T-cell (primary cell): ENCODE measurements at regions of chr17 and their contacts with region 1.

Region 1: DNA sequence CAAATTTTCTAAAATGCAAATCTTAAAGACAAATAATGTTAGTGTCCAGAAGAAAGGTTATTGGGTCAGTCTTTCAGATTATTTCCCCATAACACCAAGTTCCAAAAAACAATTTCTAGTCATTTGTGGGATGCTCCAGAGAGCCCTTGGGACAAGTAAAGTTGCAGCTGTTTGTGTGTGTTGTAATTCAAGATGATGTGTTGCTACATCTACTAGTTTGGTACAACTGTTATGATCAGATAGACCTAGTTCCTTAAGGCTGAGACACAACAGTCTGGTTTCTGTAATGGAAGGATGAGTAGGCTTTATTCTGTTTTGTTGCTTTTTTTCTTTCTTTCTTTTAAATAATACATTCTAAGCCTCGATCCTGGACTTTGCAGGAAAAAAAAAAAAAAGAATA is 41.9 kb downstream of the PIGL start:
- DNase-seq: no peak
- ATAC-seq: no peak
- H3K4me3 ChIP-seq: no peak overlapping the region
- H3K4me3 Mint-ChIP-seq: no peak overlapping the region
- H3K27ac ChIP-seq: no peak overlapping the region
- H3K27ac Mint-ChIP-seq: no peak overlapping the region
- H3K4me1 ChIP-seq: no peaks in the 10 kb centered on the region
- H3K4me1 Mint-ChIP-seq: peaks cover 5 to 6% (median 6%) of the 10 kb centered on the region in 3 donors
- H3K27me3 ChIP-seq: no peaks in the 10 kb centered on the region
- H3K27me3 Mint-ChIP-seq: no peaks in the 10 kb centered on the region

Region 2: DNA sequence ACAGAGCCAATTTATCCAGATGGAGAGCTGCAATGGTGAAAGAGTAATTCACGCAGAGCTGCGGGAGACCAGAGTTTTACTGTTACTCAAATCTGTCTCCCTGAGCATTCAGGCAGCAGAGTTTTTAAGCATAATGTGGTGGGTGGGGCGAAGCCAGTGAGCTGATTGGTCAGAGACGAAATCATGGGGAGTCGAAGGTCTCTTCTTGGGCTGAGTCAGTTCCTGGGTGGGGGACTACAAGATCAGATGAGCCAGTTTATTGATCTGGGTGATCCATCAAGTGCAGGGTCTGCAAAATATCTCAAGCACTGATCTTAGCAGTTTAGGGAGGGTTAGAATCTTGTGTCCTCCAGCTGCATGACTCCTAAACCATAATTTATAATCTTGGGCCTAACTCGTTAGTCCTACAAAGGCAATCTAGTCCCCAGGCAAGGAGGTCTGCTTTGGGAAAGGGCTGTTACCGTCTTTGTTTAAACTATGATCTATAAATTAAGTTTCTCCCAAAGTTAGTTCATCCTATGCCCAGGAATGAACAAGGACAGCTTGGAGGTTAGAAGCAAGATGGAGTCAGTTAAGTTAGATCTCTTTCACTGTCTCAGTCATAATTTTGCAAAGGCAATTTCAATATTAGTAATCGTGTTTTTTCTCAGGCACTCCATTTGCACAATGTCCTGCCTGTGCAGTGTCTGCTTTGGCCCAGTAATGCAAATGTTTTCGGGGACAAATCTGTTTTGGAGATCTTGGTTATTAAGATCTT is 14.9 kb before region 1 on chr17:
- CTCF ChIA-PET with region 1: no interaction called
- POLR2A ChIA-PET with region 1: no interaction called
- DNase-seq: no peak
- ATAC-seq: no peak
- H3K4me3 ChIP-seq: no peak overlapping the region
- H3K4me3 Mint-ChIP-seq: no peak overlapping the region
- H3K27ac ChIP-seq: no peak overlapping the region
- H3K27ac Mint-ChIP-seq: no peak overlapping the region
- H3K4me1 ChIP-seq: no peaks in the 10 kb centered on the region
- H3K4me1 Mint-ChIP-seq: peaks cover 0 to 15% (median 6%) of the 10 kb centered on the region in 3 donors
- H3K27me3 ChIP-seq: no peaks in the 10 kb centered on the region
- H3K27me3 Mint-ChIP-seq: no peaks in the 10 kb centered on the region

Region 3: DNA sequence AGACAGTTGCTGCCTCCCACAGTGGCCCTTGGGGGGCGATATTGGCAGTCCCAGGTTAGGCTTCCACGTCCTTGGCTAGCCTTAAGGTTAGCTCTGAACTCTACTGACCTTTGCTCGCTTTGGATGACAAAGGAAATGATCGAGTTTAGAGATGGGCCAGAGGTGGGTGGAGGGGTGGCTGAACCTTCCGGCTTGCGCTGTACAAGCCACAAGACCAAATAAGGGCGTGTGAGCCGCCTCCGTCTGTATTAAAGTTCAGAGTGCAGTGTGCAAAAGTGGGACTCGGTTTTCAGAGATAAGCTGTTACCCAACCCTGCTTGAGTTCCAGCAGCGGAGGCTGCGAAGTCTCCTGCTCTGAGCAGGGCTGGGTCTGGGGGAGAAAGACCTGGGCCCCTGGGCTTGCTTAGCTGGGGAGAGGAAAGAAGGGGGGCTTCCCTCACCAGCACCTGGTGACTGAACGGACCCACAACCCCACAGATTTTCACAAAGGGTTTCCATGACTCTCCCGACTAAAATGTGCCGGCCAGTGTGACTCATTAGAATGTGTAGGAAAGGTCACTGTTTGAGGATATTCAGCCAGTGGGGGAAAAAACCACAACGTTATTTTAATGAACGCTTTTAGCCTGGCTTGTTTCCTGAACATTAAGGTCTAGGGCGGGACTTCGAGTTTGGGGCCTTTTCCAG is 27.2 kb after region 1 on chr17:
- CTCF ChIA-PET with region 1: interaction called, 6 to 8 read pairs
- POLR2A ChIA-PET with region 1: interaction called in 1 of 2 experiments, 10 read pairs
- DNase-seq: peak; percentile 57 to 86 (median 72)
- ATAC-seq: peak; percentile 95 to 98 (median 98)
- H3K4me3 ChIP-seq: peak overlapping the region; percentile 14 to 32
- H3K4me3 Mint-ChIP-seq: peak overlapping the region; percentile 67 to 80 (median 74)
- H3K27ac ChIP-seq: peak overlapping the region; percentile 93
- H3K27ac Mint-ChIP-seq: peak overlapping the region; percentile 99 to 100
- H3K4me1 ChIP-seq: peaks cover 28 to 53% of the 10 kb centered on the region in 2 experiments
- H3K4me1 Mint-ChIP-seq: peaks cover 52 to 66% (median 63%) of the 10 kb centered on the region in 3 donors
- H3K27me3 ChIP-seq: no peaks in the 10 kb centered on the region
- H3K27me3 Mint-ChIP-seq: no peaks in the 10 kb centered on the region

Region 4: GRCh38 chr17:16329519-16330271 is 70.8 kb after region 1 on chr17:
- CTCF ChIA-PET with region 1: no interaction called
- POLR2A ChIA-PET with region 1: no interaction called
- DNase-seq: no peak
- ATAC-seq: no peak
- H3K4me3 ChIP-seq: no peak overlapping the region
- H3K4me3 Mint-ChIP-seq: no peak overlapping the region
- H3K27ac ChIP-seq: no peak overlapping the region
- H3K27ac Mint-ChIP-seq: no peak overlapping the region
- H3K4me1 ChIP-seq: no peaks in the 10 kb centered on the region
- H3K4me1 Mint-ChIP-seq: no peaks in the 10 kb centered on the region
- H3K27me3 ChIP-seq: no peaks in the 10 kb centered on the region
- H3K27me3 Mint-ChIP-seq: no peaks in the 10 kb centered on the region